ENCODE measurements at regions of chr22 and their contacts with region 1.

Region 1: GRCh38 chr22:40044102-40044869 is 49.5 kb downstream of the FAM83F start:
- DNase-seq: peak; percentile 98 to 99
- ATAC-seq: peak; percentile 82 to 92 (median 85)
- H3K4me3 ChIP-seq: peak overlapping the region; percentile 59
- H3K4me3 Mint-ChIP-seq: peak overlapping the region; percentile 97
- H3K27ac ChIP-seq: peak overlapping the region; percentile 87
- H3K27ac Mint-ChIP-seq: peak overlapping the region; percentile 97 to 99
- H3K4me1 ChIP-seq: peaks cover 21% of the 10 kb centered on the region
- H3K4me1 Mint-ChIP-seq: peaks cover 35 to 36% of the 10 kb centered on the region in 2 donors
- H3K27me3 ChIP-seq: no peaks in the 10 kb centered on the region
- H3K27me3 Mint-ChIP-seq: peaks cover 9 to 13% of the 10 kb centered on the region in 2 donors
- CTCF ChIP-seq: no peak

Region 2: DNA sequence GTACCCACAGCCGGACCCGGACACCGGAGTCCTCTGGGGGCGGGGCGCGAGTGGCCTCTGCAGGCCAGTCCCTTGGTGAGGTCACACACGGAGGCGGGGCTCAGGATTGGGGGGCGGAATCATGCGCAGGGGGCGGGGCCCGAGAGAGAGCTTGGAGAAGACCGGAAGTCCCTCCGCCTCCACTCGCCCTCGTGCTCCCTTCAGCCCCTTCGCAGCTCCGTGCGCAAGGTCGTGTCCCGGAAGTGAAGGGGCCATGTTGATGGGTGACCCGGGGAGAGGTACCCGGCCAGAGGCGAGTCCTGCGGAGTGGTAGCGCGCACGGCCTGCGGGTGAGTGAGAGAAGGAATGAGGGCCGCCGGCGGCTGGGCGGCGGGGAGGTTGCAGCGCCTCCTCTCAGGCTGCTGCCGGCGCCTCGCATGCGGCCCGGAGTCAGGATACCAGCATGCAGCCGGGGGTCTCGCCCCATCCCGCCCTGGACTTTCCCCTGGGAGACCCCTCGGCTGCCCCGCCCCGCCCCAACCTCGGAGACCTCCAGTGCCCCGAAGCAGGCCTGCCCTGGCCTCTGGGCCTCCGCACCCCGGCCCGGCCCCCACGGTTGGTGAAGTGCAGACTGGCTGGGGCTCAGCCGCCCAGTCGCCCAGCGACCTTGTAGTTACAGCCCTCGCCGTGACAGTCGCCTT is 542.0 kb before region 1 on chr22 and contains the start of gene MIEF1:
- intact Hi-C with region 1: loop called (anchors 1 kb)
- DNase-seq: peak; percentile 89 to 95
- ATAC-seq: peak; percentile 97 to 99 (median 97)
- H3K4me3 ChIP-seq: peak within 1 kb of the TSS; percentile 76
- H3K4me3 Mint-ChIP-seq: peak within 1 kb of the TSS; percentile 91
- H3K27ac ChIP-seq: peak within 1 kb of the TSS; percentile 80
- H3K27ac Mint-ChIP-seq: peak within 1 kb of the TSS; percentile 90 to 94
- H3K4me1 ChIP-seq: peaks cover 26% of the 10 kb centered on the region
- H3K4me1 Mint-ChIP-seq: peaks cover 27 to 50% of the 10 kb centered on the region in 2 donors
- H3K27me3 ChIP-seq: no peaks in the 10 kb centered on the region
- H3K27me3 Mint-ChIP-seq: no peaks in the 10 kb centered on the region
- CTCF ChIP-seq: no peak
- total RNA-seq, gene MIEF1: 16.1 to 27.6 (median 25.1) TPM

Region 3: DNA sequence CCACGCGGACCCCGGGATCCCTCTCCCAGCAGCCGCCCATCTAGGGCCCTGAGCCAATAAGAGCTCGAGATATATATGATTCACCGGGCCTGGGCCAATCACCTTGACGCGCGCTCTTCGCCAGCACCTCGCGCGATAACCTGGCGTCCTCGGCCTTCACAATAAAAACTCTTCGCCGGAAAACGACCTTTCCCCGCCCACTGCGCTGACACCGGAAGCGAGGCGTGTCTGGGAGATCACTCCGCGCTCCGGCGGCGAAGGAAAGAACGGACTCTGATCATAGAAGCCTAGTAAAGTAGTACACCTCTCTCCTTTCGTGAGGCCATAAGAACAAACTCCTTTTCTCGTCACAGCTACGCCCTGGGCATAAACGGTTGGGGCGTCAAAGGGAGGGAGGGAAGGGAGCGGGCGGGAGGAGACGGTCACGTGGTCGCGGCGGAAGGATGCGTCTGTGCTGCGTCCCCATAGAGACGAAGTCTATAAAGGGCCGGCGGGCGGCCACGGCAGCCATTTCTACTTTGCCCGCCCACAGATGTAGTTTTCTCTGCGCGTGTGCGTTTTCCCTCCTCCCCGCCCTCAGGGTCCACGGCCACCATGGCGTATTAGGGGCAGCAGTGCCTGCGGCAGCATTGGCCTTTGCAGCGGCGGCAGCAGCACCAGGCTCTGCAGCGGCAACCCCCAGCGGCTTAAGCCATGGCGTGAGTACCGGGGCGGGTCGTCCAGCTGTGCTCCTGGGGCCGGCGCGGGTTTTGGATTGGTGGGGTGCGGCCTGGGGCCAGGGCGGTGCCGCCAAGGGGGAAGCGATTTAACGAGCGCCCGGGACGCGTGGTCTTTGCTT is 524.0 kb before region 1 on chr22 and contains the start of gene ATF4:
- intact Hi-C with region 1: loop called (anchors 1 kb)
- DNase-seq: peak; percentile 92 to 99
- ATAC-seq: peak; percentile 88 to 95 (median 88)
- H3K4me3 ChIP-seq: peak within 1 kb of the TSS; percentile 97
- H3K4me3 Mint-ChIP-seq: peak within 1 kb of the TSS; percentile 98
- H3K27ac ChIP-seq: peak within 1 kb of the TSS; percentile 91
- H3K27ac Mint-ChIP-seq: peak within 1 kb of the TSS; percentile 96 to 98
- H3K4me1 ChIP-seq: peaks cover 45% of the 10 kb centered on the region
- H3K4me1 Mint-ChIP-seq: peaks cover 42% of the 10 kb centered on the region in 2 donors
- H3K27me3 ChIP-seq: no peaks in the 10 kb centered on the region
- H3K27me3 Mint-ChIP-seq: no peaks in the 10 kb centered on the region
- CTCF ChIP-seq: no peak
- total RNA-seq, gene ATF4: 235 to 242 (median 238) TPM

Region 4: GRCh38 chr22:40009292-40009769 is 35.0 kb before region 1 on chr22:
- intact Hi-C with region 1: no loop called
- DNase-seq: no peak
- ATAC-seq: peak; percentile 21 to 73 (median 66)
- H3K4me3 ChIP-seq: no peak overlapping the region
- H3K4me3 Mint-ChIP-seq: peak overlapping the region; percentile 65
- H3K27ac ChIP-seq: no peak overlapping the region
- H3K27ac Mint-ChIP-seq: peak overlapping the region in 1 of 2 donors; percentile 19
- H3K4me1 ChIP-seq: peaks cover 16% of the 10 kb centered on the region
- H3K4me1 Mint-ChIP-seq: peaks cover 19 to 29% of the 10 kb centered on the region in 2 donors
- H3K27me3 ChIP-seq: peaks cover 18% of the 10 kb centered on the region
- H3K27me3 Mint-ChIP-seq: peaks cover 42 to 54% of the 10 kb centered on the region in 2 donors
- CTCF ChIP-seq: no peak

Region 5: GRCh38 chr22:40177738-40178416 is 133.6 kb after region 1 on chr22 and contains the start of gene TNRC6B:
- intact Hi-C with region 1: loop called (anchors 2 kb)
- DNase-seq: peak; percentile 42 to 95
- ATAC-seq: peak; percentile 88 to 96 (median 96)
- H3K4me3 ChIP-seq: peak within 1 kb of the TSS; percentile 53
- H3K4me3 Mint-ChIP-seq: peak within 1 kb of the TSS; percentile 97
- H3K27ac ChIP-seq: peak within 1 kb of the TSS; percentile 65
- H3K27ac Mint-ChIP-seq: peak within 1 kb of the TSS; percentile 88 to 91
- H3K4me1 ChIP-seq: peaks cover 32% of the 10 kb centered on the region
- H3K4me1 Mint-ChIP-seq: peaks cover 55 to 59% of the 10 kb centered on the region in 2 donors
- H3K27me3 ChIP-seq: no peaks in the 10 kb centered on the region
- H3K27me3 Mint-ChIP-seq: no peaks in the 10 kb centered on the region
- CTCF ChIP-seq: no peak
- total RNA-seq, gene TNRC6B: 112 to 141 (median 138) TPM

Region 6: DNA sequence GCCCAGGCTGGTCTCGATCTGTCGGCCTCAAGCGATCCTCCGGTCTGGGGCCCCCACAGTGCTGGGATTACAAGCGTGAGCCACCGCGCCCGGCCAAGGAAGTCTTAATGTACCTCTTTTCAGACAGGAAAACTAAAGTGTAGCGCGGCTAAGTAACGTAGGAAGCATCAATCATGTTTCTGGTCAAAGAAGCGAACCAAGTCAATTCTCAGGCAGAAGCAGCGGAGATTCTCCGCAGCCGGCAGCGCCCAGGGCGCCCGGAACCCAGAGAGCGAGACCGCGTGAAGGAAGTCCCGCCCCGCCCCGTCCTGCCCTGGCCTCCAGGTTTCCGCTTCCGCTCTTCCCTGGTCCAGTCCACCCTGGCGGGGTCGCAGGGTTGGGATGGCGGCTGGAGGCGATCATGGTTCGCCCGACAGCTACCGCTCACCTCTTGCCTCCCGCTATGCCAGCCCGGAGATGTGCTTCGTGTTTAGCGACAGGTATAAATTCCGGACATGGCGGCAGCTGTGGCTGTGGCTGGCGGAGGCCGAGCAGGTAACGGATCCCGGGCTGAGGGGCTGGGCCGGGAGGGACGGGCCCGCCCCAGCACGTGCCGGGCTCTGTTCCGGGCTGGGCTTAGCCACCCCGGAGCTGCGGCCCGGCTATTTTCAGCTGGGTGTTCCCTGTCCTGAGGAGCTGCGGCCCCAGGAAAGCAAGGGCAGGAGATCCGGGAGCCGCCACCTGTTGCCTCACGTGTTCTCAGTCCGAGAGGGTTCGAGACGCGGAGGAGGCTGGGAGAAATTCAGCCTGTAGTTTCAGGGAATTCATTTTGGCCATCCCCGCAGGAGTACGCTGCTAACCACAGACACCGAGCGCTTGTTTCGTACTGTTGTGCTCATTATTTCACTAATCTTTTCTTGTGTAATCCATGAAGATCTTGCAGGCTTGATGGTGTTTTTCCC is 302.2 kb after region 1 on chr22 and contains the start of gene ADSL:
- intact Hi-C with region 1: loop called (anchors 2 kb)
- DNase-seq: peak; percentile 74 to 90
- ATAC-seq: peak; percentile 89 to 93 (median 91)
- H3K4me3 ChIP-seq: peak within 1 kb of the TSS; percentile 76
- H3K4me3 Mint-ChIP-seq: peak within 1 kb of the TSS; percentile 98
- H3K27ac ChIP-seq: peak within 1 kb of the TSS; percentile 65
- H3K27ac Mint-ChIP-seq: peak within 1 kb of the TSS; percentile 89
- H3K4me1 ChIP-seq: peaks cover 25% of the 10 kb centered on the region
- H3K4me1 Mint-ChIP-seq: peaks cover 23 to 29% of the 10 kb centered on the region in 2 donors
- H3K27me3 ChIP-seq: no peaks in the 10 kb centered on the region
- H3K27me3 Mint-ChIP-seq: no peaks in the 10 kb centered on the region
- CTCF ChIP-seq: no peak
- total RNA-seq, gene ADSL: 31.3 to 49.8 (median 41.2) TPM

Measured in natural killer cell (primary cell).